HepG2 (cell line): ENCODE measurements at regions of chr6 and their contacts with region 1.

Region 1: GRCh38 chr6:51855310-51856082 is 231.9 kb downstream of the PKHD1 start:
- DNase-seq: peak; percentile 79
- ATAC-seq: peak; percentile 97
- H3K4me3 ChIP-seq: no peak overlapping the region
- H3K27ac ChIP-seq: no peak overlapping the region
- H3K4me1 ChIP-seq: no peaks in the 10 kb centered on the region
- H3K27me3 ChIP-seq: no peaks in the 10 kb centered on the region
- CTCF ChIP-seq: peak; percentile 78
- EP300 ChIP-seq: no peak
- POLR2A ChIP-seq: no peak
- RAD21 ChIP-seq: peak; percentile 49

Region 2: GRCh38 chr6:51792273-51793030 is 63.0 kb before region 1 on chr6:
- CTCF ChIA-PET with region 1: no interaction called
- POLR2A ChIA-PET with region 1: no interaction called
- in situ Hi-C with region 1: no loop called
- intact Hi-C with region 1: no loop called
- DNase-seq: no peak
- ATAC-seq: no peak
- H3K4me3 ChIP-seq: no peak overlapping the region
- H3K27ac ChIP-seq: no peak overlapping the region
- H3K4me1 ChIP-seq: no peaks in the 10 kb centered on the region
- H3K27me3 ChIP-seq: no peaks in the 10 kb centered on the region
- CTCF ChIP-seq: no peak
- EP300 ChIP-seq: no peak
- POLR2A ChIP-seq: no peak
- RAD21 ChIP-seq: no peak

Region 3: GRCh38 chr6:51949468-51949867 is 94.0 kb after region 1 on chr6:
- CTCF ChIA-PET with region 1: no interaction called
- POLR2A ChIA-PET with region 1: no interaction called
- in situ Hi-C with region 1: no loop called
- intact Hi-C with region 1: no loop called
- DNase-seq: no peak
- ATAC-seq: no peak
- H3K4me3 ChIP-seq: no peak overlapping the region
- H3K27ac ChIP-seq: no peak overlapping the region
- H3K4me1 ChIP-seq: no peaks in the 10 kb centered on the region
- H3K27me3 ChIP-seq: no peaks in the 10 kb centered on the region
- CTCF ChIP-seq: no peak
- EP300 ChIP-seq: no peak
- POLR2A ChIP-seq: no peak
- RAD21 ChIP-seq: no peak

Region 4: GRCh38 chr6:51959744-51960383 is 104.4 kb after region 1 on chr6:
- CTCF ChIA-PET with region 1: interaction called, 27 read pairs
- POLR2A ChIA-PET with region 1: no interaction called
- in situ Hi-C with region 1: no loop called
- intact Hi-C with region 1: loop called (anchors 1 kb)
- DNase-seq: peak; percentile 70
- ATAC-seq: peak; percentile 97
- H3K4me3 ChIP-seq: no peak overlapping the region
- H3K27ac ChIP-seq: no peak overlapping the region
- H3K4me1 ChIP-seq: no peaks in the 10 kb centered on the region
- H3K27me3 ChIP-seq: no peaks in the 10 kb centered on the region
- CTCF ChIP-seq: peak; percentile 95
- EP300 ChIP-seq: no peak
- POLR2A ChIP-seq: no peak
- RAD21 ChIP-seq: peak; percentile 74

Region 5: GRCh38 chr6:52020945-52021570 is 165.6 kb after region 1 on chr6:
- CTCF ChIA-PET with region 1: interaction called, 29 read pairs
- POLR2A ChIA-PET with region 1: no interaction called
- in situ Hi-C with region 1: loop called (anchors 10 kb)
- intact Hi-C with region 1: no loop called
- DNase-seq: peak; percentile 36
- ATAC-seq: no peak; the same call in 2 of the 3 replicates
- H3K4me3 ChIP-seq: no peak overlapping the region
- H3K27ac ChIP-seq: no peak overlapping the region
- H3K4me1 ChIP-seq: peaks cover 21% of the 10 kb centered on the region
- H3K27me3 ChIP-seq: no peaks in the 10 kb centered on the region
- CTCF ChIP-seq: peak; percentile 73
- EP300 ChIP-seq: no peak
- POLR2A ChIP-seq: no peak
- RAD21 ChIP-seq: peak; percentile 52; the same call in 1 of the 2 replicates